ENCODE measurements at regions of chr1 and their contacts with region 1.

Region 1: DNA sequence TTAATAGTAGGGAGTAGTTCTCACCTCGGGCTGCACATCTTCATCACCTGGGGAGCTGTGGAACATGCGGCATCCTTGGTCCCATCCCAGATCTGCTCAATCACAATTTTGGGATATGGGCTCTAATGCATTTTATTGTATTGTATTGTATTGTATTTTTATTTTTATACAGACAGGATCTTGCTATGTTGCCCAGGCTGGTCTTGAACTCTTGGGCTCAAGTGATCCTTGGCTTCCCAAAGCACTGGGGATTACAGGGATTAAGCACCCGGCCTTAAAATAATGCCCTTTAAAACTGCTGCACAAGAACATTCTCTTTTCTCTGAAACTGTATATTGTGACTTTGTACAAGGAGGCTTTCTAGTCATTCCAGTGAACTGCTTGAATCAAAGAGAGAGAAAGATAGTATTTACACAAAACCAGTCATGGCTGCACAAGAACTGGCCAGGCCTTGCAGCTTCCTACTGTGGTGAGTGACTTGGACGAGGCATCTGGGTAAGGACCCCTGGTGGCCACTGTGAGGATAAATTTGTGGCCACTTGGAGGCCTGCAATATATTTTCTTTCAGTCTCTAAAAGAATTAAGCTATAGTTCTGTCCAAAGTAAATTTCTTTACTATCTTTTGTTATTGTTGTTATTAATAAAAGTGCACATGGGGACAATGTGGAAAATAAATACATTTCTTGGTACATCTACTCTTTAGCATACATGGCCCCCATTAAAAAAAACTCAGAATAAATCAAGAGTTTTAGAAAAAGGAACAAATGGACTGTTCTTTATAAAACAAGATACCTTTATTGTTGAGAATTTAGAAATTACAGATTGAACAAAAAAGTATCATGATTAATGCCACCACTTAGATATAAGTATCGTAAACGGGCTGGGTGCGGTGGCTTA is 48.0 kb downstream of the TBCE start:
- DNase-seq: peak; percentile 20 to 59
- ATAC-seq: peak; percentile 42 to 62
- H3K4me3 ChIP-seq: no peak overlapping the region
- H3K27ac ChIP-seq: peak overlapping the region in 1 of 4 donors; percentile 23
- H3K4me1 ChIP-seq: peaks cover 7 to 13% of the 10 kb centered on the region in 2 donors
- H3K27me3 ChIP-seq: no peaks in the 10 kb centered on the region
- CTCF ChIP-seq: peak; percentile 62 to 76 (median 72)
- POLR2A ChIP-seq: no peak

Region 2: DNA sequence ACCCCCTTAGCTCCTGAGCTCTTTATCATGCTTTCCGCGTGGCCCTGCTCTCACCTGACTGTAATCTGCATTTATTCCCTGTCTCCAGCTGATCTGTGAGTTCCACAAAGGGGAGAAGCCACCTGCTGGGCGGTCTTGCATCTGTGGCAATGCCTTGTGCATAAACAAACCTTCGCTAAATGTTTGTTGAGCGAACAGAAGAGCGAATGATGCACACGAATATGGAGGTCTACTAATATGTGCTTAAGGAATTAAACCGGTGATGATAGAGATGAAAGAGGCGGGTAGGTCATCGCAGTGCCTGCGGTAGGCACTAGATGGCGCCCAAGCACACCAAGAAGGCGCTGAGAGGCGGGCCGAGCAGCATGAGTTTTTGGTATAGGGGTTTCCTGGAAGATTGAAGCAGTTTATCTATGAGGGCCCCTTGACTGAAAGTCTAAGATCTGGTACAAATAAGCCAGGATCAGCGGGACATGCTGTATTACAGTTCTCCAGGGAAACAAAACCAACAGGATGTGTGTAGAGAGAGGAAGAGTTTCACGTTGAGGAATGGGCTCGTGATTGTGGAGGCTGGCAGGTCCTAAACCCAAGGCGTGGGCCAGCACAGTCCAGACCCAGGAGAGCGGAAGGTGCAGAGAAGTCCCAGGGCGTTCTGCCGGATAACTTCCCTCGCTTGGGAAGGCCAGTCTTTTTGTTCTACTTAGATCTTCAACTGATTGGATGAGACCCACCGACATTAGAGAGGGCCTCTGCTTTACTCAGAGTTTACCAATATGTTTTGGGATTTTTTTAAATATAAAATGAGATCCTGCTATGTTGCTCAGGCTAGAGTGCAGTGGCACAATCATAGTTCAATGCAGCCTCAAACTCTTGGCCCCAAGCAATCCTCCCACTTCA is 321.3 kb before region 1 on chr1:
- in situ Hi-C with region 1: loop called in 1 of 4 experiments (anchors 10 kb)
- intact Hi-C with region 1: no loop called
- DNase-seq: peak in 1 of 2 donors; percentile 66
- ATAC-seq: peak; percentile 61 to 64
- H3K4me3 ChIP-seq: peak overlapping the region in 2 of 4 donors; percentile 15 to 37
- H3K27ac ChIP-seq: no peak overlapping the region
- H3K4me1 ChIP-seq: peaks cover 5% of the 10 kb centered on the region in 2 donors
- H3K27me3 ChIP-seq: no peaks in the 10 kb centered on the region
- CTCF ChIP-seq: peak; percentile 74 to 95 (median 82)
- POLR2A ChIP-seq: no peak

Region 3: DNA sequence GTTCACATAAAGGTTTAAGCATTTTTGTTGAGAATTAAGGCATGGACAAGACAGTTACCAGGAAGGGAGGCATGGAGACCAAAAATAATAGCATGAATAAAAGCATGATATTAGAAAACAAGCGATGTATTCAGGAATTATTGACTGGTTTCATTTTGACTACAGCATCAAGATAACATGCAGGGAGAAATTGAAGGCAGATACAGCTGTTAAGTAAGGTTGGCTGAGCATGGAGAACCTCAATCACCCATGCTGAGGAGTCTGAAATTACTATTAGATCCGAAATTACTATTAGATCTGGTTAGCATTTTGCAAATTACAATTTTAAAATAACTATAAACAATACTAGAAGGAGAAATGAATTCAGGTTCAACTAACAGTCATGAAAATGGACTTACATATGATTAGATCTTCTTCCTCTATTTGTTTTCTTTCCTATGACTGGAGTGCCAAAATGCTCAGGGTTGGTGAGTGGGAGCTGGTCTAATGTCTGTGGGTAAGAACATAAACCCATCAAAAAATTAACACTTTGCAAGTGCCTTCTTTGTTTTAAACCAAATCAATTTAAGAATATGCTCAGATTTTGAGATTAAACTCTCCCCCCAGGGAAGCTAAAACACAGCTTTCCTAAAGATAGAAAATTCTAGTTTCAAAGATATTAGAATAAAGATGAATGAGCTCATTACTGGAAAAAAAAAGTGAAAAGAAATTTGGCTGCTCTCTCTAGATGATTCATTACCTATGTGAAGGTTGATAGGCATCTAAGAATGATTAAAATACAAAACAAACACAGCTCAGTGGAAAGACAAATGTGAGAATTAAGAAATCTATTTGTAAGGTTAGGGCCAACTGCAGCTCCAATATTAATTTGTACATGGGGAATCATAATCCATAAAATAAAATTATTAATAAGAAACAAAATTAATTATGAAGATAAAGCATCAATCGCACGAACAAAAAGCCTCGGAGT is 168.9 kb before region 1 on chr1:
- in situ Hi-C with region 1: loop called in 2 of 4 experiments (anchors 5 kb)
- intact Hi-C with region 1: no loop called
- DNase-seq: no peak
- ATAC-seq: no peak
- H3K4me3 ChIP-seq: no peak overlapping the region
- H3K27ac ChIP-seq: no peak overlapping the region
- H3K4me1 ChIP-seq: no peaks in the 10 kb centered on the region
- H3K27me3 ChIP-seq: no peaks in the 10 kb centered on the region
- CTCF ChIP-seq: no peak
- POLR2A ChIP-seq: no peak

Region 4: DNA sequence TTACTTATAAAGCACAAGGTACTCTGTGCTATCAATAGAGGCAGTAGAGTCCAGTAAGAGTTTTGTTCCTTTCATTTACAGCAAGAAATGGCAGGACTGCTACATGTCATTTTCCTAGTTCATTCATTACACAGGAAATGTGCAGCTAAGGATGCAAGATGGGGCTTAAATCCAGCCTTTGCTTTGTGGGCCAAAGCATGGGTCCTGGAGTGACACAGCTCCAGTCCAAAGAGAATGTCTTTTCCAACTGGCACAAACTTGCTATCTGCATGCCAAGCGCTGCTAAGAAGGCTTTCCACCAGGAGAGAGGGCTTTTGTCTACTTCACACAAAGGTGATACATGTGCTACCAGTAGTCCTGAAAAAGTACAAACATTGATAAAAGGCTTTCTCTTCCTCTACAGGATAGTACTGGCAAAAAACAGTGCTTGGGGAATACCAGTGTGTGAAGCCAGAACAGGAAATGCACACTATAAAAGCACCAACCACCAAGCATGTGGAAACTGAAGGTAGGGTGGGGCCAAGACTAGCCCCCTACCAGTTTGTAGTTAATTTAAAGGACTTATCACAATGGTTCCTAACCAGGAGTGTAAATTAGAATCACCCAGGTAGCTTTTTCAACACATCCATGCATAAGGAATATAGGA is 156.0 kb before region 1 on chr1:
- in situ Hi-C with region 1: loop called in 3 of 4 experiments (anchors 5 to 10 kb)
- intact Hi-C with region 1: no loop called
- DNase-seq: no peak
- ATAC-seq: no peak
- H3K4me3 ChIP-seq: no peak overlapping the region
- H3K27ac ChIP-seq: no peak overlapping the region
- H3K4me1 ChIP-seq: peaks cover 4 to 14% of the 10 kb centered on the region in 2 donors
- H3K27me3 ChIP-seq: no peaks in the 10 kb centered on the region
- CTCF ChIP-seq: no peak
- POLR2A ChIP-seq: no peak

Region 5: GRCh38 chr1:235328357-235329138 is 86.7 kb before region 1 on chr1 and contains the start of gene GGPS1:
- in situ Hi-C with region 1: loop called in 1 of 4 experiments (anchors 10 kb)
- intact Hi-C with region 1: loop called (anchors 1 kb)
- DNase-seq: peak; percentile 97 to 99
- ATAC-seq: peak; percentile 73 to 75
- H3K4me3 ChIP-seq: peak within 1 kb of the TSS; percentile 88 to 98 (median 95)
- H3K27ac ChIP-seq: peak within 1 kb of the TSS; percentile 94 to 98 (median 96)
- H3K4me1 ChIP-seq: peaks cover 57 to 61% of the 10 kb centered on the region in 2 donors
- H3K27me3 ChIP-seq: no peaks in the 10 kb centered on the region
- CTCF ChIP-seq: peak in 2 of 5 experiments; percentile 22 to 34
- POLR2A ChIP-seq: peak; percentile 74 to 81
- total RNA-seq, gene GGPS1: 14.5 to 21.9 (median 17.7) TPM

Region 6: GRCh38 chr1:235455823-235456222 is 40.6 kb after region 1 on chr1:
- in situ Hi-C with region 1: no loop called
- intact Hi-C with region 1: no loop called
- DNase-seq: no peak
- ATAC-seq: no peak
- H3K4me3 ChIP-seq: no peak overlapping the region
- H3K27ac ChIP-seq: no peak overlapping the region
- H3K4me1 ChIP-seq: no peaks in the 10 kb centered on the region
- H3K27me3 ChIP-seq: no peaks in the 10 kb centered on the region
- CTCF ChIP-seq: no peak
- POLR2A ChIP-seq: no peak